Endothelial cell of umbilical vein (primary cell): ENCODE measurements at regions of chr1 and their contacts with region 1.

Region 1: GRCh38 chr1:240732390-240732789 is 120.4 kb upstream of the GREM2 start:
- DNase-seq: peak; percentile 70
- H3K4me3 ChIP-seq: no peak overlapping the region
- H3K27ac ChIP-seq: no peak overlapping the region
- H3K4me1 ChIP-seq: no peaks in the 10 kb centered on the region
- H3K27me3 ChIP-seq: no peaks in the 10 kb centered on the region
- CTCF ChIP-seq: peak; percentile 55
- POLR2A ChIP-seq: no peak

Region 2: DNA sequence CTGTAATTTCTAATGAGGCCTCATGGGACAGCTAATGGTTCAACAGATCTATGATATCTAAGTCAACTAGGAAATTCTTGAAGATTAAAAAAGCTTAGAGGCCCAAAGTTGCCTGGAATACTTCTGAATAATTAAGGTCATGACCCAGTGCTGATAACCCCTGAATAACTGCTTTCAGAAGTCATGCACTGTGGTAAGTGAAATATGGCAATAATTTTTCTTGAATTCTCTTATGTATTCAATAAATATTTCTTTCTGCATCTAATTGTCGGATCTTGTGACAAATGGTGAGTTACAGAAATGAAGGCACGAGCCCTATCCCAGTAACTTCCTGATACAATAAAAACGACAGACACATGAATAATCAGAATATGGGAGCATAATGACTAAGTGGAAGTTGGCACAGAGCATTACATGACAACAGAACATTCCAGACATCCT is 98.8 kb after region 1 on chr1:
- CTCF ChIA-PET with region 1: interaction called, 31 read pairs
- POLR2A ChIA-PET with region 1: no interaction called
- dilution Hi-C with region 1: no loop called
- intact Hi-C with region 1: loop called (anchors 1 kb)
- DNase-seq: peak; percentile 89
- H3K4me3 ChIP-seq: no peak overlapping the region
- H3K27ac ChIP-seq: peak overlapping the region; percentile 67
- H3K4me1 ChIP-seq: peaks cover 13% of the 10 kb centered on the region
- H3K27me3 ChIP-seq: no peaks in the 10 kb centered on the region
- CTCF ChIP-seq: no peak
- POLR2A ChIP-seq: no peak

Region 3: DNA sequence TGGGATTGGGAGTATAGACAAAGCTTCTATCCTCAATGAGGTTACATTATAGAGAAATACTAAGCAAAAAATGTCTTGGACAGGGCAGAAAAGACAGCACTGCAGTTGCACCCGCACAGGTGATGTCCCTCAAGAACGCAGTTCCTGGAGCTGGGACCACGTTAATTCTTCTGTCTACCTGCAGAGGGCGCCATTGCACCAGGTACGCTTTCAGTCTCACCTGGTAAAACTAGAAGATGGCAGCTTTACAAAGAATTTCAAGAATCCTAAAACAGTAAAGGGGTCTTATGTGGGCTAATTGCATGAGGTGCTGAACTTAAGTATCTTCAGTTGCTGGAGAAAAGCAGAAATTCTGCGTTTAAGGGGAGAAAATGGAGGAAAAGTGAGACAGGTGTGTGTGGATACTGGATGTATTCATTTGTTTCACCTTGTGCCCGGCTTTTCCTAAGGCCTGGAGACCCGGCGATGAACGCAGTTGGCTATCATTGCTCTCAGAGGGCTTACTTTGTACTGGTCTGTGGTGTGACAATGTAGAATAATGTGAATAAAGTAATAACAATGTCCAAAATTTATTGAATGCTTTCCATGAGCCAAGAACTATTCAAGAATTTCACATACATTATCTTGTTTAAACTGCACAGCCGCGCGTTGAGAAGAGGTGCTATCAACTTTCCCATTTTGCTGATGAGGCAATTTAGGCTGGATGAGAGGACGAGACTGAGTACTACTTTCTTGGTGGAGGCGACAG is 155.8 kb after region 1 on chr1:
- CTCF ChIA-PET with region 1: interaction called, 49 read pairs
- POLR2A ChIA-PET with region 1: no interaction called
- dilution Hi-C with region 1: no loop called
- intact Hi-C with region 1: loop called (anchors 1 kb)
- DNase-seq: peak; percentile 36
- H3K4me3 ChIP-seq: no peak overlapping the region
- H3K27ac ChIP-seq: no peak overlapping the region
- H3K4me1 ChIP-seq: no peaks in the 10 kb centered on the region
- H3K27me3 ChIP-seq: no peaks in the 10 kb centered on the region
- CTCF ChIP-seq: peak; percentile 68 to 72
- POLR2A ChIP-seq: no peak

Region 4: DNA sequence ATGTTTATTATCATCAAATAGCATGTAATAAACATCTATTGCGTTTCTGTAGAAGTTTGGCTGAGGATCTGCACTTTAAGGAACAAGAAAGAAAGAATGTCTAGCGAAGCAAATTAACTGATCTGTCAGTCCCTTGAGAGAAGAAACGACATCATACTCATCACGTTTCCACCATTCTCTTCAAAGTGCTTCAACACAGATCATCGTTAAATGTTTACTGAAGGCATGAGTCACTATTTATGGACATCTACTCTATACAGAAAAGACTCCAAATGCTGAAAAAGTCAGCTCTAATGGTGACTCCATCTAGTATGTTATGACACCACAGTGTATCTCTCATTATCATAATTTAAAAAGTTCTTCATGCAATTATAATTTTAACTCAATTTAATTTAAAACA is 255.5 kb after region 1 on chr1:
- CTCF ChIA-PET with region 1: no interaction called
- POLR2A ChIA-PET with region 1: no interaction called
- dilution Hi-C with region 1: no loop called
- intact Hi-C with region 1: no loop called
- DNase-seq: no peak
- H3K4me3 ChIP-seq: no peak overlapping the region
- H3K27ac ChIP-seq: no peak overlapping the region
- H3K4me1 ChIP-seq: no peaks in the 10 kb centered on the region
- H3K27me3 ChIP-seq: no peaks in the 10 kb centered on the region
- CTCF ChIP-seq: no peak
- POLR2A ChIP-seq: no peak

Region 5: DNA sequence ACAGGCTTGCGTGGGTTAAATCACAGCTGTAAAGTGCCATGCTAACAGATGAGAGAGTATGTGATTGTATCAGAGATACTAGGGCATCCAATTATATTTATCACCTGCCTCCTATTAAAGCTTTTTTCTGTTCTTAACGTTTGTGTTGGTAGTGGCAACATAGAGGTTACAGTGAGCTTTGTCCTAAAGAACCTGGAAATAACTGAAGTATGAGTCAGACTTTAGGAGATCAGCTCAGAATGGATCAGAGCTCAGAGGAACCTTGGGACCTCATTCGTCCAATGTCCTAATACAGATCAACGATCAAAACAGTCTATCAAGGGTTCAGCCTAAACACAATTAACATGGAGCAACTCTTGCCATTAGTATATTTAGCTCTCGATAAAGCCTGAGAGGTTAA is 543.6 kb after region 1 on chr1:
- CTCF ChIA-PET with region 1: no interaction called
- POLR2A ChIA-PET with region 1: no interaction called
- dilution Hi-C with region 1: no loop called
- intact Hi-C with region 1: no loop called
- DNase-seq: peak; percentile 17
- H3K4me3 ChIP-seq: no peak overlapping the region
- H3K27ac ChIP-seq: peak overlapping the region; percentile 18
- H3K4me1 ChIP-seq: peaks cover 13% of the 10 kb centered on the region
- H3K27me3 ChIP-seq: no peaks in the 10 kb centered on the region
- CTCF ChIP-seq: no peak
- POLR2A ChIP-seq: no peak

Region 6: GRCh38 chr1:241356519-241357365 is 624.4 kb after region 1 on chr1 and contains the start of gene RGS7:
- CTCF ChIA-PET with region 1: interaction called, 4 read pairs
- POLR2A ChIA-PET with region 1: no interaction called
- dilution Hi-C with region 1: no loop called
- intact Hi-C with region 1: loop called (anchors 5 kb)
- DNase-seq: peak; percentile 60
- H3K4me3 ChIP-seq: peak within 1 kb of the TSS; percentile 43 to 71 (median 45)
- H3K27ac ChIP-seq: no peak within 1 kb of the TSS
- H3K4me1 ChIP-seq: peaks cover 3% of the 10 kb centered on the region
- H3K27me3 ChIP-seq: no peaks in the 10 kb centered on the region
- CTCF ChIP-seq: no peak
- POLR2A ChIP-seq: no peak
- total RNA-seq, gene RGS7: 0.44 and 1.2 TPM in 2 replicates

Region 7: DNA sequence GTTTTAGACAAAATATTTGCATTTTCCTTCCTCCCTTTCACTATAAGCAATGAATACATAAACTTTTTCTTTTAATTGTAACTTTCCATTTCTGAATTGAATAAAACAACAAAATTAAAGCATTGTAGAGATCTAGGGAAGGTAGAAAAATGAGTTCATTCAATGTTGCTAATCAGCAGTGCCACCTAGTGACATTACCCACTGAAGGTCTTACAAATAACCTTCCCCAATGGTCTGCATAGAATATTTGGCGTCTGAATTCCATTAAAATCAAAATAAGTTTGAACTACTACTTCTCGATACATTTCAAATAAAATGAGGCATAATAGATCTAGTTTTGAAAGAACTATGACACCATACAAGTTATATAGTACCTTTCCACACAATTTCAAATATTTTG is 767.5 kb after region 1 on chr1:
- CTCF ChIA-PET with region 1: interaction called, 17 read pairs
- POLR2A ChIA-PET with region 1: no interaction called
- dilution Hi-C with region 1: no loop called
- intact Hi-C with region 1: loop called (anchors 1 kb)
- DNase-seq: peak; percentile 59
- H3K4me3 ChIP-seq: no peak overlapping the region
- H3K27ac ChIP-seq: no peak overlapping the region
- H3K4me1 ChIP-seq: no peaks in the 10 kb centered on the region
- H3K27me3 ChIP-seq: no peaks in the 10 kb centered on the region
- CTCF ChIP-seq: peak; percentile 24 to 42
- POLR2A ChIP-seq: no peak

Region 8: GRCh38 chr1:241834733-241835377 is 1102.5 kb after region 1 on chr1:
- CTCF ChIA-PET with region 1: no interaction called
- POLR2A ChIA-PET with region 1: no interaction called
- dilution Hi-C with region 1: no loop called
- intact Hi-C with region 1: loop called (anchors 5 kb)
- DNase-seq: peak; percentile 44
- H3K4me3 ChIP-seq: no peak overlapping the region
- H3K27ac ChIP-seq: no peak overlapping the region
- H3K4me1 ChIP-seq: peaks cover 18% of the 10 kb centered on the region
- H3K27me3 ChIP-seq: peaks cover 4 to 8% of the 10 kb centered on the region in 2 experiments
- CTCF ChIP-seq: peak; percentile 36 to 54
- POLR2A ChIP-seq: no peak